Left cardiac atrium (tissue), 4 donors: ENCODE measurements at regions of chr12 and their contacts with region 1.

Region 1: DNA sequence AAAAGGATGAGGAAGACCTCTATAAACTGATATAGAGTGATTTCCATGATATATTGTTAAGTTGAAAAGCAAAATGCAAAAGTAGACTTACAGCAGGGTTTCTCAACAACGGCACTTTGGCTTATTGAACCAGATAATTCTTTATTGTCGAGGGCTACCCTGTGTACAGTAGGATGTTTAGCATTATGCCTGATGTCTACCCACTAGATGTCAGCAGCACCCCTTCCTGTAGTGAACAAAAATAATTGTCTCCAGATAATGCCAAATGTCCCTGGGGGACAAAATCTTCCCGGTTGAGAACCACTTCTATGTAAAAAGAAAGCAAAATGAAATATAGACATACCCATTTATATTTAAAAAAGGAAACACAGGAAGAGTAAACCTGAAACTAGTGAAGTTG is 32.4 kb downstream of the ABCD2 start:
- DNase-seq: no peak
- ATAC-seq: peak in 1 of 2 donors; percentile 57

Region 2: DNA sequence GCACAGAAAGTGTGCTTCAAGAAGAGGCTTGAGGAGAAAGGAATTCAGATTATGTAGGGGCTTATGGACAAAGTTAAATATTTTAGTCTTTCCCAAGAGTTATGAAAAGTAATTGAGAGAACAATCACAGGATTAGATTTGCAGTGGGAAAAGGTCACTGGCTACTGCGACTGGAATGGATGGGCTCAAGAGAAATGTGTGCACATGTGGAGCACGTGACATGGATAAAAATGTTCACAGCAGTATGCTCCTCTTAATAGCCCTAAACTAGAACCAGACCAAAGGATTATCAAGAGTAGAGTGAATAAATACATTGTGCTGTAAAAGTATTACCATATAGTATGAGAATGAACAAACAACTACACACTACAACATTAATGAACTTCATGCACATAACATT is 45.8 kb before region 1 on chr12:
- intact Hi-C with region 1: no loop called
- DNase-seq: no peak
- ATAC-seq: no peak

Region 3: GRCh38 chr12:39692258-39692853 is 105.1 kb after region 1 on chr12:
- intact Hi-C with region 1: loop called in 1 of 2 experiments (anchors 5 kb)
- DNase-seq: no peak
- ATAC-seq: no peak